Caco-2 (cell line): ENCODE measurements at regions of chr15 and their contacts with region 1.

Region 1: GRCh38 chr15:60326824-60327654 is 70.7 kb downstream of the ANXA2 start:
- DNase-seq: peak in 1 of 2 experiments; percentile 63
- H3K4me3 ChIP-seq: no peak overlapping the region
- H3K4me3 Mint-ChIP-seq: no peak overlapping the region
- H3K27ac Mint-ChIP-seq: no peak overlapping the region
- H3K4me1 ChIP-seq: no peaks in the 10 kb centered on the region
- H3K4me1 Mint-ChIP-seq: no peaks in the 10 kb centered on the region
- H3K27me3 ChIP-seq: no peaks in the 10 kb centered on the region
- H3K27me3 Mint-ChIP-seq: peaks cover 14% of the 10 kb centered on the region
- CTCF ChIP-seq: peak; percentile 80 to 84

Region 2: DNA sequence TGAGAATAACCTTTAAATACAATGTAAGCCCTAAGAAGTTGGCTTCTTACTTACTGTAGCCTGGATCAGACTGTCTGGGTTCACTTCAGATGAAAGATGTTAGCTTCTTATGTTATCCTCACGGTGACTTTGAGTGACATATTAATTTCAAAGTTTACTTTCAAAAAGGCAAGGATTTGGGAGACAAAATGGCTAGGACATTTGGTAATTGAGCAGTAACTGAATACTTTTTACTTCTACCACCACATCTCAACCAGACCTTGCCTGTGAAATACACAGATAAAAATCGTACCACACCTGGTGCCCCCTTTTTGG is 601.9 kb before region 1 on chr15:
- CTCF ChIA-PET with region 1: interaction called, 12 read pairs
- POLR2A ChIA-PET with region 1: no interaction called
- intact Hi-C with region 1: loop called (anchors 1 kb)
- DNase-seq: no peak
- H3K4me3 ChIP-seq: no peak overlapping the region
- H3K4me3 Mint-ChIP-seq: no peak overlapping the region
- H3K27ac Mint-ChIP-seq: no peak overlapping the region
- H3K4me1 ChIP-seq: no peaks in the 10 kb centered on the region
- H3K4me1 Mint-ChIP-seq: no peaks in the 10 kb centered on the region
- H3K27me3 ChIP-seq: no peaks in the 10 kb centered on the region; the same call in 1 of the 2 replicates
- H3K27me3 Mint-ChIP-seq: peaks cover 13% of the 10 kb centered on the region
- CTCF ChIP-seq: no peak

Region 3: DNA sequence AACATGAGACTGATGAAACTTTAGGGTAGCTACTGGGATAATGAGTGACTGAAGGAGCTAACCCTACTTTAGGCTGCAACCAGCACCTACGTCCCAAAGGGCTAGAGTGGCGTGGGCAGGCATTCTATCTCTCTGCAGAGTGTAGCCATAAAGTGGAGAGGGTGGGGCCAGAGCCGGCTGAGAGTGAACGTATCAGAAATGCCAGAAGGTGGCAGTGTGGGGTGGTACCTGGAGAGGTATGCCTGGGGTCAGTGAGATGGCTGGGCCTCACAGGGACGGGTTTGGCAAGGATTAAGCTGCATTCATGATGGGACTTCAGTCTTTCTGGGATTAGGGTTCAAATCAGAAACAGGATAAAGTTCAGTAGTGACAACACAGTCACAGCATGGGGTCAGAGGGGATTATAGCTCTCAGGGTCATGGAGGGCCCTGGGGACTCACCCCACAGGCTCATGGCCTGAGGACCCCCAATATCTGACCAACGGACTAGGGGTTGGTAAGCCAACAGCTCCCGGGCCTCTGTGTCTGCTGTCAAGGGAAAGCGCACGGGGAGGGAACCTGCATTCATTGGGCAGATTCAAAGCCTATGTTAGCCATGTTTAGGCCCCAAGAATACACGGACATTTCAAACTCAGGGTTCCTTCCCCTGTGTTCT is 409.4 kb before region 1 on chr15:
- CTCF ChIA-PET with region 1: interaction called, 5 read pairs
- POLR2A ChIA-PET with region 1: no interaction called
- intact Hi-C with region 1: loop called (anchors 1 kb)
- DNase-seq: peak; percentile 76 to 84
- H3K4me3 ChIP-seq: no peak overlapping the region
- H3K4me3 Mint-ChIP-seq: no peak overlapping the region
- H3K27ac Mint-ChIP-seq: no peak overlapping the region
- H3K4me1 ChIP-seq: no peaks in the 10 kb centered on the region
- H3K4me1 Mint-ChIP-seq: no peaks in the 10 kb centered on the region
- H3K27me3 ChIP-seq: no peaks in the 10 kb centered on the region
- H3K27me3 Mint-ChIP-seq: peaks cover 17% of the 10 kb centered on the region
- CTCF ChIP-seq: peak; percentile 39 to 60

Region 4: DNA sequence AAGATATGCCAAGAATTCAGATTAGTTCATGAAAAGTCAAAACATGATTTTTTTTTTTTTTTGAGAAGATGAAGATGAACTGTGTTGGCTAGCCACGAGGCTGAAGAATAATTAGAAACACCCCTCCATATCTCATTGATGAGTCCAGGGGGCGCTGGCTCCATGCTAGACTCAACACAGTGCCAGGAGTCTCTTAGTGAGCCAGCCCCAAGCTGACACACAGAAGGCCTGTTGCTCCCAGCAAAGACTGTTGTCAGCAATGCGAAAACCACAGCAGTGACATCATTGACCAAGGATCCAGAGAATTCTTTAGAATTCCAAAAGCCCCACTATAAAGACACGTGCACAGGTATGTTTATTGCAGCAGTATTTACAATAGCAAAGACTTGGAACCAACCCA is 114.5 kb before region 1 on chr15:
- CTCF ChIA-PET with region 1: interaction called, 4 read pairs
- POLR2A ChIA-PET with region 1: no interaction called
- intact Hi-C with region 1: loop called (anchors 10 kb)
- DNase-seq: peak in 1 of 2 experiments; percentile 13
- H3K4me3 ChIP-seq: no peak overlapping the region
- H3K4me3 Mint-ChIP-seq: no peak overlapping the region
- H3K27ac Mint-ChIP-seq: no peak overlapping the region
- H3K4me1 ChIP-seq: no peaks in the 10 kb centered on the region
- H3K4me1 Mint-ChIP-seq: no peaks in the 10 kb centered on the region
- H3K27me3 ChIP-seq: no peaks in the 10 kb centered on the region
- H3K27me3 Mint-ChIP-seq: peaks cover 7% of the 10 kb centered on the region
- CTCF ChIP-seq: no peak

Region 5: GRCh38 chr15:60507596-60508424 is 180.8 kb after region 1 on chr15:
- CTCF ChIA-PET with region 1: no interaction called
- POLR2A ChIA-PET with region 1: no interaction called
- intact Hi-C with region 1: no loop called
- DNase-seq: peak in 1 of 2 experiments; percentile 60
- H3K4me3 ChIP-seq: no peak overlapping the region
- H3K4me3 Mint-ChIP-seq: no peak overlapping the region
- H3K27ac Mint-ChIP-seq: no peak overlapping the region
- H3K4me1 ChIP-seq: peaks cover 4% of the 10 kb centered on the region
- H3K4me1 Mint-ChIP-seq: peaks cover 13% of the 10 kb centered on the region
- H3K27me3 ChIP-seq: no peaks in the 10 kb centered on the region
- H3K27me3 Mint-ChIP-seq: no peaks in the 10 kb centered on the region
- CTCF ChIP-seq: peak; percentile 83 to 84

Region 6: GRCh38 chr15:60520825-60521368 is 193.9 kb after region 1 on chr15:
- CTCF ChIA-PET with region 1: no interaction called
- POLR2A ChIA-PET with region 1: no interaction called
- intact Hi-C with region 1: loop called (anchors 5 kb)
- DNase-seq: peak; percentile 60 to 78
- H3K4me3 ChIP-seq: no peak overlapping the region
- H3K4me3 Mint-ChIP-seq: no peak overlapping the region
- H3K27ac Mint-ChIP-seq: no peak overlapping the region
- H3K4me1 ChIP-seq: no peaks in the 10 kb centered on the region
- H3K4me1 Mint-ChIP-seq: peaks cover 11% of the 10 kb centered on the region
- H3K27me3 ChIP-seq: no peaks in the 10 kb centered on the region
- H3K27me3 Mint-ChIP-seq: no peaks in the 10 kb centered on the region
- CTCF ChIP-seq: peak; percentile 83 to 86

Region 7: DNA sequence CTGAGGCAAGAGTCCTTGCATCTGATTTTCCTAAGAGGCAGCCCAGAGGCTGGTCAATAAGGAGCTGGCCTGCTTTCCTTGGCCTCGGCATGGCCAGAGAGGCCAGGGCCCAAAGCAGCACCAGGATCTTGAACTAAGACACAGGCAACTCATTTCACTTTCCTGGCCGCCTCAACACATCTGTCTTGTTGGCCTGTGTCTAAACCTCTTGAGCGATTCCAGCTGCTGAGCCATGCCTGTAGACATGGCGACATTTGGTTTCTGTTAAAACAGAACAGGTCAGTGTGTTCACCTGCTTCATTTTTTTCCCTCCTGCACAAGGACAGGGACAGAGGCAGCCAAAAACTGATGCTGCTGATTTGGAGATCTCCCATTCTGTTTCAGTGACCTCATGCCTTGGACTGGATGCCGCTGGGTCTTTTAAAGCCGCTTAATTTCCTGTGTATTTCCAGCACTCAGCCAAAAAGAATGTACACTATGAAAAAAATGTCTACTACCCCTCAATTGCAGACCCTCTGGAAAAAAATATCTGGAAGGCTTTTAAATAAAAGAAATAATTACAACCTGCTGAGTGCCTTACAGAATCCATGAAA is 418.5 kb after region 1 on chr15:
- CTCF ChIA-PET with region 1: no interaction called
- POLR2A ChIA-PET with region 1: no interaction called
- intact Hi-C with region 1: no loop called
- DNase-seq: no peak
- H3K4me3 ChIP-seq: no peak overlapping the region
- H3K4me3 Mint-ChIP-seq: no peak overlapping the region
- H3K27ac Mint-ChIP-seq: no peak overlapping the region
- H3K4me1 ChIP-seq: no peaks in the 10 kb centered on the region
- H3K4me1 Mint-ChIP-seq: no peaks in the 10 kb centered on the region
- H3K27me3 ChIP-seq: no peaks in the 10 kb centered on the region
- H3K27me3 Mint-ChIP-seq: peaks cover 3% of the 10 kb centered on the region
- CTCF ChIP-seq: no peak